Activated naive CD4-positive, alpha-beta T cell treated with anti-CD3 and anti-CD28 coated beads for 36 hours (primary cell): ENCODE measurements at regions of chr2 and their contacts with region 1.

Region 1: GRCh38 chr2:234368861-234369261 is 128.0 kb downstream of the ARL4C start:
- DNase-seq: peak; percentile 58
- H3K4me3 Mint-ChIP-seq: no peak overlapping the region
- H3K27ac Mint-ChIP-seq: peak overlapping the region; percentile 74
- H3K4me1 Mint-ChIP-seq: peaks cover 73% of the 10 kb centered on the region
- H3K27me3 Mint-ChIP-seq: no peaks in the 10 kb centered on the region

Region 2: DNA sequence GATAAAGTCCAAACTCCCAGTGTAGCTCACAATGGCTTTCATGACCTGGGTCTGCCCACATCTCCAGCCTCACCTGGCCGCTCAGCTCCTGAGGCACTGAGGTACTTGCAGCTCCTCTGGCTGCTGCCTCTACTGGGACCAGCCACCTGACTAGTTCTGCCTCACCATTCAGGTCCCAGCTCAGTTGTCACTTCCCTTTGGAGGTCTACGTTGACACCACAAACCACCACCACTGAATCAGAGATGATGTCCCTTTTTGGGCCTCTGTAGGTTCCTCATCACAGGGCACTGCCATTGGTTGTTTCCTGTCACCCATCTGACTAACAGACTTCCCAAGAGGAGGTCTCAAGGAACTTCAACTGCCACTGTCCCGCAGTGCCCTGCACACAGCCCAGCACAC is 297.2 kb before region 1 on chr2:
- CTCF ChIA-PET with region 1: no interaction called
- intact Hi-C with region 1: no loop called
- DNase-seq: no peak
- H3K4me3 Mint-ChIP-seq: no peak overlapping the region
- H3K27ac Mint-ChIP-seq: no peak overlapping the region
- H3K4me1 Mint-ChIP-seq: peaks cover 8% of the 10 kb centered on the region
- H3K27me3 Mint-ChIP-seq: no peaks in the 10 kb centered on the region

Region 3: DNA sequence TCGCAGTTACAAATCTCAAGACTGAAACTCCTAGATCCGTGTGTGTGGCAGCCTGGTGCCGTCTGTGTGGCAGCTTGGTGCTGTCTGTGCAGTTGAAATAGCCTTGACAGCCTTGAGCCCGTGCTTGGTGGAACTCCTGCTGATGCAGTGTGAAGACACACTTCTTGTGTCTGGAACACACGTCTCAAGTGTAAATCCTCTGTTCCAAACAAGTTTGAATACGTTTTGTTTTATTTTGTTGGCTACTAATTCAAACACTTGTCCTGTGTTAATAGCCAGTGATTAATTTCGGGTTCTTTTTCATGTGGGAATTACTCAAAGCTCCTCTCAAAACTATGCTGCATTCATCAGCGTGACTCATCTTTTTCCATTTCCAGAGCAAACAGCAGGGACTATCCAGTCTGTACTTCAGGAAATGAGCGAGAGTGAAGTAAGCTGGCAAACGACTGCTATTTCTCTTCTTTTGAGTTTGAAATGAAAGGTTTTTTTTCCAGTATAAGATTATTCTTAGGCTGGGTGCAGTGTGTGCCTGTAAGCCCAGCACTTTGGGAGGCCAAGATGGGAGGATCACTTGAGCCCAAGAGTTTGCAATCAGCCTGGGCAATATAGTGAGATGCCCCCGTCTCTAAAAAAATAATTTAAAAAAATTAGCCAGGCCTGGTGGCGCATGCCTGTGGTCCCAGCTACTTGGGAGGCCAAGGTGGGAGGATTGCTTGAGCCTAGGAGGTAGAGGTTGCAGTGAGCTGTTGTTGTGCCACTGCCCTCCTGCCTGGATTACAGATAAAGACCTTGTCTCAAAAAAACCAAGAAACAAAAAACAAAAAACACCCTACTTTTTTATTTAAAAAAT is 165.5 kb before region 1 on chr2:
- CTCF ChIA-PET with region 1: no interaction called
- intact Hi-C with region 1: no loop called
- DNase-seq: peak; percentile 24
- H3K4me3 Mint-ChIP-seq: no peak overlapping the region
- H3K27ac Mint-ChIP-seq: peak overlapping the region; percentile 36
- H3K4me1 Mint-ChIP-seq: peaks cover 7% of the 10 kb centered on the region
- H3K27me3 Mint-ChIP-seq: no peaks in the 10 kb centered on the region

Region 4: DNA sequence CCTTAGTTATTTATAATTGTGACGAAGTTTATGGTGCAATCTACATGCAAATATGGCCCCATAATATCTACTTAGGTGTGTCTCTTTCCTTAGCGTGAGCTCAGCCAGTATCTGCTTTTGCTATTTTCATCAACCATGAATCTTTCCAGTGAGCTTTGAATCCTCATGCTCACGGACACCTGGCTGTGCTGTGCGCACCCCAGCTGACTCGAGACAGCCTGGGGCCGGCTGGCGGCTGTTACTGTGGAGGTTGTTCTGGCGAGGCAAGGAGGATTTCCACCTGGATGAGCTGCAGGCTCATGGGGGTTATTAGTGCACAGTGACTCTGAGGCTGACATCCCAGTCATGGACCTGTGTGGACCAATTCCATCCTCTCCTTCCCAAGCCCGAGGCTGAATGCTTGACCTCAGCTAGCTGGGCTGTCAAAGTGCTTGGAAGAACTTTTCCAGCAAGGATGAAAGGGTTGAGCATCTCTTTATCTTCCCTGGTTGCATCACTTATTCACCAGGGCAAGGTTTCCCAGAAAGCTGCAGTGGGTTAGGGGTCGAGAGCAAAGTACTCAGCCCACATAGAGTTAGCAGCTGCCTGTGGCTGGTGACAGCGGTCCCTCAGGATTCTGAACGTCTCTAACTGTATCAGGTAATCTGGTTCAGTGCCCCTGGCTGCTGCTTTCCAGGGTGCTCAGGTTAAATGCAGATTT is 13.7 kb before region 1 on chr2:
- CTCF ChIA-PET with region 1: interaction called, 5 read pairs
- intact Hi-C with region 1: loop called (anchors 2 kb)
- DNase-seq: no peak
- H3K4me3 Mint-ChIP-seq: no peak overlapping the region
- H3K27ac Mint-ChIP-seq: no peak overlapping the region
- H3K4me1 Mint-ChIP-seq: peaks cover 14% of the 10 kb centered on the region
- H3K27me3 Mint-ChIP-seq: no peaks in the 10 kb centered on the region